HEK293T (cell line): ENCODE measurements at regions of chr19 and their contacts with region 1.

Region 1: GRCh38 chr19:10095948-10096621 is 6.4 kb downstream of the ANGPTL6 start:
- DNase-seq: peak; percentile 98

Region 2: GRCh38 chr19:10106100-10106936 is 10.2 kb after region 1 on chr19 and contains the start of gene PPAN:
- CTCF ChIA-PET with region 1: interaction called, 3 read pairs
- POLR2A ChIA-PET with region 1: interaction called, 62 read pairs
- DNase-seq: peak; percentile 99

Region 3: GRCh38 chr19:10112895-10113591 is 17.0 kb after region 1 on chr19:
- CTCF ChIA-PET with region 1: interaction called, 6 read pairs
- POLR2A ChIA-PET with region 1: interaction called, 62 read pairs
- DNase-seq: peak; percentile 62

Region 4: GRCh38 chr19:10120538-10121189 is 24.6 kb after region 1 on chr19:
- CTCF ChIA-PET with region 1: no interaction called
- POLR2A ChIA-PET with region 1: interaction called, 24 read pairs
- DNase-seq: no peak